MCF 10A (cell line): ENCODE measurements at regions of chr6 and their contacts with region 1.

Region 1: GRCh38 chr6:26122793-26123674 is 35.8 kb downstream of the HFE start:
- DNase-seq: peak; percentile 99
- H3K4me3 Mint-ChIP-seq: peak overlapping the region; percentile 98
- H3K27ac Mint-ChIP-seq: peak overlapping the region; percentile 99
- H3K4me1 Mint-ChIP-seq: peaks cover 14% of the 10 kb centered on the region
- H3K27me3 Mint-ChIP-seq: no peaks in the 10 kb centered on the region
- CTCF ChIP-seq: no peak

Region 2: DNA sequence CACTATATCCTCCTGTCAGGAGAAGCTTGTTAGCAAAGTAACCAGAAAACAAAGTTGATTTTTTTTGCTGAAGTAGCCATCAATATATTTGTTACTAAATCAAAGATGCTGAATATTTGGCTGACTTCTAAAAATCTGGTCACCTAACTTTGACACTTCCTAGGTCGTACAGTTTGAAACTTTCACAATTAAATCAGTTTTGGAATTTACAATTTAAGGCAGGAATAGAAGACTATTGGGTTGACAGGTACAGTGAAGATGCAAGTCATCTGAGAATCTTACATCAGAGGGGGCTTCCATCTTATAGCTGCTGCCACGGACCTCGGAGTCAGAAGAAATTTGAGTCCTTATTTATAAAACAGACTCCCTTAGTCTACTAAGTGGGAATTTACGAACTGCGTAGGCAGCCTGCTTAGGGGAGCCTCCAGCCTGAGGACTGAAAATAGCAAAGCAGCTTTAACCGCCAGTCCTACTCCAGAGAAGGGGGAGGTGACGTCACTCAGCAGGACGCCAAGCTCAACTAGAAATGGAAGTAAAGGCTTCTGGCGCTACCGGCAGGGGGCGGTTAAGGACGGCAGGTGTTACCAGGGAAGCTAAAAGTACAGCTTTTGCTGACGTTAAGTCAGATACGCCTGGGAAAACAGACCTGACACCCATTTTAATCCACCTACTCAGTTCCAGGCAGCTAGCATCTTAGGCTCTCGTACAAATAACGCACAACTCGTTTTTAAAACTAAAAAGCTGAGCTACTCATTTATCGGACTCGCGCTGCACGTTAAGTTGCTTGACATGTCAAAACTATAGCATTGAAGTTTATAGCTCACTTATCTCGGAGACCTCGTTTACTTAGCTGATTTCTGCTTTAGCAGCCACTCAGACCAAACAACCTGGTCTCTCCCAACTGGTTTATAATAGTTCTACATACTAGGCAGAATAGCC is 96.9 kb before region 1 on chr6:
- CTCF ChIA-PET with region 1: interaction called, 3 read pairs
- POLR2A ChIA-PET with region 1: interaction called, 332 read pairs
- intact Hi-C with region 1: no loop called
- DNase-seq: peak; percentile 96
- H3K4me3 Mint-ChIP-seq: peak overlapping the region; percentile 83
- H3K27ac Mint-ChIP-seq: peak overlapping the region; percentile 84
- H3K4me1 Mint-ChIP-seq: peaks cover 17% of the 10 kb centered on the region
- H3K27me3 Mint-ChIP-seq: no peaks in the 10 kb centered on the region
- CTCF ChIP-seq: peak; percentile 81

Region 3: DNA sequence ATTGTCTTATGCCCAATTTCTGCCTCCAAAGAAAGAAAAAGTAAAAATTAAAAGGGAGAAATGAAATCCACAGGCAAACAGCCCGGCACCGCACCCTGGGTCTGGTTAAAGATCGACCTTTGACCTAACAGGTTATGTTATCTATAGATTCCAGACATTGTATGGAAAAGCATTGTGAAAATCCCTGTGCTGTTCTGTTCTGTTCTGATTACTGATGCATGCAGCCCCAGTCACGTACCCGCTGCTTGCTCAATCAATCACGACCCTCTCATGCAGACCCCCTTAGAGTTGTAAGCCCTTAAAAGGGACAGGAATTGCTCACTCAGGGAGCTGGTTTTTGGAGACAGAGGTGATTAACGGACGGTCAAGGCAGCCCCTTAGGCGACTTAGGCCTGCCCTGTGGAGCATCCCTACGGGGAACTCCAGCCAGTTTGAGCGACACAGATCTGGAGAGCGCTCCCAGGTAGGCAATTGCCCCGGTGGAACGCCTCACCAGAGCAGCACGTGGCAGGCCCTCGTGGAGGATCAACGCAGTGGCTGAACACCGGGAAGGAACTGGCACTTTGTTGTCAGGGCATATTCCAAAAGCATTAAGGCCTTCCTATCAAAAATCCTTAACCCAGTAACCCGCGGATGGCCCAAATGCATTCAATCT is 47.8 kb before region 1 on chr6:
- CTCF ChIA-PET with region 1: no interaction called
- POLR2A ChIA-PET with region 1: no interaction called
- intact Hi-C with region 1: no loop called
- DNase-seq: no peak
- H3K4me3 Mint-ChIP-seq: no peak overlapping the region
- H3K27ac Mint-ChIP-seq: no peak overlapping the region
- H3K4me1 Mint-ChIP-seq: no peaks in the 10 kb centered on the region
- H3K27me3 Mint-ChIP-seq: no peaks in the 10 kb centered on the region
- CTCF ChIP-seq: no peak

Region 4: DNA sequence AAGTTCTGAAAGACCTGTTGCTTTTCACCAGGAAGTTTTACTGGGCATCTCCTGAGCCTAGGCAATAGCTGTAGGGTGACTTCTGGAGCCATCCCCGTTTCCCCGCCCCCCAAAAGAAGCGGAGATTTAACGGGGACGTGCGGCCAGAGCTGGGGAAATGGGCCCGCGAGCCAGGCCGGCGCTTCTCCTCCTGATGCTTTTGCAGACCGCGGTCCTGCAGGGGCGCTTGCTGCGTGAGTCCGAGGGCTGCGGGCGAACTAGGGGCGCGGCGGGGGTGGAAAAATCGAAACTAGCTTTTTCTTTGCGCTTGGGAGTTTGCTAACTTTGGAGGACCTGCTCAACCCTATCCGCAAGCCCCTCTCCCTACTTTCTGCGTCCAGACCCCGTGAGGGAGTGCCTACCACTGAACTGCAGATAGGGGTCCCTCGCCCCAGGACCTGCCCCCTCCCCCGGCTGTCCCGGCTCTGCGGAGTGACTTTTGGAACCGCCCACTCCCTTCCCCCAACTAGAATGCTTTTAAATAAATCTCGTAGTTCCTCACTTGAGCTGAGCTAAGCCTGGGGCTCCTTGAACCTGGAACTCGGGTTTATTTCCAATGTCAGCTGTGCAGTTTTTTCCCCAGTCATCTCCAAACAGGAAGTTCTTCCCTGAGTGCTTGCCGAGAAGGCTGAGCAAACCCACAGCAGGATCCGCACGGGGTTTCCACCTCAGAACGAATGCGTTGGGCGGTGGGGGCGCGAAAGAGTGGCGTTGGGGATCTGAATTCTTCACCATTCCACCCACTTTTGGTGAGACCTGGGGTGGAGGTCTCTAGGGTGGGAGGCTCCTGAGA is 35.5 kb before region 1 on chr6 and contains the start of gene HFE:
- CTCF ChIA-PET with region 1: interaction called, 3 read pairs
- POLR2A ChIA-PET with region 1: interaction called, 16 read pairs
- intact Hi-C with region 1: no loop called
- DNase-seq: peak; percentile 53
- H3K4me3 Mint-ChIP-seq: peak within 1 kb of the TSS; percentile 88
- H3K27ac Mint-ChIP-seq: peak within 1 kb of the TSS; percentile 92
- H3K4me1 Mint-ChIP-seq: peaks cover 10% of the 10 kb centered on the region
- H3K27me3 Mint-ChIP-seq: no peaks in the 10 kb centered on the region
- CTCF ChIP-seq: no peak
- total RNA-seq, gene HFE: 2.8 and 5.2 TPM in 2 replicates

Region 5: DNA sequence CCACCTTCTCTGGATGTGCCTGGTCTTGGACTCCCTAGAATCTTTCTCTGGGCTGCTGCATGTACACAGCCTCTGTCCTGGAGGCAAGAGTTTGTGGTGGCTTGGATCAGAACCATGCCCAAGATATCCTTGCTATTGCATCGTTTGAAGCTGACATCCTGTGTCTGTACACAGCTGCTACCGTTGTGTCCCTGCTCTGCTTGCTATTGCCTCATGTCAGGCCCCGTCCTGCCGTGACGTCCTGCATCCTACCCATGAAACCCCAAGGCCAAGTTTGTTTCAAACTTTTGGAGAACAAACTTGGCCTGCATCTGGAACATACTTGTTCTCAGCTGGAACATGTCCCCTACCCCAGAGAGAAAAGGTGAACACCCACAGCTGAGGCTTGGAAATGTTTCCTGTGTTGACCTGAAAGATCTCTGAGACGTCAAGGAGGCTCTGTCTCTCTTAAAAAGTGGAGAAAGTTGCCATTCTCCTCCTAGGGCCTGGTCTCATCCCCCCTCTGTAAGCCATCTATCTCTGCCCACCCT is 42.3 kb after region 1 on chr6:
- CTCF ChIA-PET with region 1: interaction called, 4 read pairs
- POLR2A ChIA-PET with region 1: interaction called, 1,660 read pairs
- intact Hi-C with region 1: no loop called
- DNase-seq: no peak
- H3K4me3 Mint-ChIP-seq: no peak overlapping the region
- H3K27ac Mint-ChIP-seq: peak overlapping the region; percentile 19
- H3K4me1 Mint-ChIP-seq: peaks cover 7% of the 10 kb centered on the region
- H3K27me3 Mint-ChIP-seq: no peaks in the 10 kb centered on the region
- CTCF ChIP-seq: no peak

Region 6: GRCh38 chr6:26216356-26216885 is 93.4 kb after region 1 on chr6:
- CTCF ChIA-PET with region 1: no interaction called
- POLR2A ChIA-PET with region 1: interaction called, 148 read pairs
- intact Hi-C with region 1: no loop called
- DNase-seq: peak; percentile 98
- H3K4me3 Mint-ChIP-seq: no peak overlapping the region
- H3K27ac Mint-ChIP-seq: no peak overlapping the region
- H3K4me1 Mint-ChIP-seq: no peaks in the 10 kb centered on the region
- H3K27me3 Mint-ChIP-seq: no peaks in the 10 kb centered on the region
- CTCF ChIP-seq: no peak

Region 7: DNA sequence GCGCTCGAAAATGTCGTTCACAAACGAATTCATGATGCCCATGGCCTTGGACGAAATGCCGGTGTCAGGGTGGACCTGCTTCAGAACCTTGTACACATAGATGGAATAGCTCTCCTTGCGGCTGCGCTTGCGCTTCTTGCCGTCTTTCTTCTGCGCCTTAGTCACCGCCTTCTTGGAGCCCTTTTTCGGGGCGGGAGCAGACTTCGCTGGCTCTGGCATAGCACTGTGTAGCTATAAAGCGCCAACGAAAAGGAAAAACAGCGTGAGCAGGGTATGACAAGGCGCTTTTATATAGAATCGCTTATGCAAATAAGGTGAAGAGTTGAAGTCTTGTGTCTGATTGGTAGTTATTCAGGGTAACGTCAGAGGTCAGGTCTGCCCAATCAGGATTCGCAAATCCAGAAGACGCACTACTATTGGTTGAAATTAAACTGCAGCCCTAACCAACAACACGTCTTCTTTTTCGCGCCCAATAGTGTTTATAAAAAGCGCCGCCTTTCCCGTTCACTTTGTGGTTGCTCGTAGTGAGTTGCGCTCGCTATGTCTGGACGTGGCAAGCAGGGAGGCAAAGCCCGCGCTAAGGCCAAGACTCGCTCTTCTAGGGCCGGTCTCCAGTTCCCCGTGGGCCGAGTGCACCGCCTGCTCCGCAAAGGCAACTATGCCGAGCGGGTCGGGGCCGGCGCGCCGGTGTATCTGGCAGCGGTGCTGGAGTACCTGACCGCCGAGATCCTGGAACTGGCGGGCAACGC is 1009.7 kb after region 1 on chr6:
- CTCF ChIA-PET with region 1: no interaction called
- POLR2A ChIA-PET with region 1: interaction called, 59 read pairs
- intact Hi-C with region 1: no loop called
- DNase-seq: peak; percentile 99
- H3K4me3 Mint-ChIP-seq: no peak overlapping the region
- H3K27ac Mint-ChIP-seq: no peak overlapping the region
- H3K4me1 Mint-ChIP-seq: peaks cover 11% of the 10 kb centered on the region
- H3K27me3 Mint-ChIP-seq: no peaks in the 10 kb centered on the region
- CTCF ChIP-seq: no peak

Region 8: DNA sequence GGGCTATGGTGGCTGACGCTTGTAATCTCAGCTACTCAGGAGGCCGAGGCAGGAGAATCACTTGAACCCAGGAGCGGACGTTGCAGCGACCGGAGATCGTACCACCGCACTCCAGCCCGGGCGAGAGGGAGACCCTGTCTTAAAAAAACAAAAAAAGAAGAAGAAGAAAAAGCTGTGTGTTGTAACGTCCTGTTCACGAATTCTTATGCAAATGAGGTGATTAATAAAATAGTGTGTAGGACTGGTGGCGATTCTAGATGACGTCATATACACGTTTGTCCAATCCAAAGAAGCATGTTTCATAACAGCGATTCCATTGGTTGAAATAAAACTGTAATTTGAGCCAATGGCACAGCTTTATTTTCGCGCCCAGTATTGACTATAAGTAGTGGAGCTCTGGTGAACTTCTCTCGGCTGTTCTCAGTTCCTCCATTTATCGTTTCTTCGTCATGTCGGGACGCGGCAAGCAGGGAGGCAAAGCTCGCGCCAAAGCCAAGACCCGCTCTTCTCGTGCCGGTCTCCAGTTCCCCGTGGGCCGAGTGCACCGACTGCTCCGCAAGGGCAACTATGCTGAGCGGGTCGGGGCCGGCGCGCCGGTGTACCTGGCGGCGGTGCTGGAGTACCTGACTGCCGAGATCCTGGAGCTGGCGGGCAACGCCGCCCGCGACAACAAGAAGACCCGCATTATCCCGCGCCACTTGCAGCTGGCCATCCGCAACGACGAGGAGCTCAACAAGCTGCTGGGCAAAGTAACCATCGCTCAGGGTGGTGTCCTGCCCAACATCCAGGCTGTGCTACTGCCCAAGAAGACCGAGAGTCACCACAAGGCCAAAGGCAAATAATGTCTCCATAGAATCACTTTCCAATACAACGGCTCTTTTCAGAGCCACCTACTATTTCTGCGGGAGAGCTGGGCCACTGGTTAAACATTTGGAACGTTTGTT is 1742.1 kb after region 1 on chr6:
- CTCF ChIA-PET with region 1: no interaction called
- POLR2A ChIA-PET with region 1: interaction called, 35 read pairs
- intact Hi-C with region 1: no loop called
- DNase-seq: peak; percentile 96
- H3K4me3 Mint-ChIP-seq: peak overlapping the region; percentile 91
- H3K27ac Mint-ChIP-seq: peak overlapping the region; percentile 97
- H3K4me1 Mint-ChIP-seq: no peaks in the 10 kb centered on the region
- H3K27me3 Mint-ChIP-seq: no peaks in the 10 kb centered on the region
- CTCF ChIP-seq: no peak